ENCODE measurements at regions of chr15 and their contacts with region 1.

Region 1: GRCh38 chr15:68700455-68701123 is 120.1 kb downstream of the ANP32A start:
- DNase-seq: peak; percentile 90

Region 2: DNA sequence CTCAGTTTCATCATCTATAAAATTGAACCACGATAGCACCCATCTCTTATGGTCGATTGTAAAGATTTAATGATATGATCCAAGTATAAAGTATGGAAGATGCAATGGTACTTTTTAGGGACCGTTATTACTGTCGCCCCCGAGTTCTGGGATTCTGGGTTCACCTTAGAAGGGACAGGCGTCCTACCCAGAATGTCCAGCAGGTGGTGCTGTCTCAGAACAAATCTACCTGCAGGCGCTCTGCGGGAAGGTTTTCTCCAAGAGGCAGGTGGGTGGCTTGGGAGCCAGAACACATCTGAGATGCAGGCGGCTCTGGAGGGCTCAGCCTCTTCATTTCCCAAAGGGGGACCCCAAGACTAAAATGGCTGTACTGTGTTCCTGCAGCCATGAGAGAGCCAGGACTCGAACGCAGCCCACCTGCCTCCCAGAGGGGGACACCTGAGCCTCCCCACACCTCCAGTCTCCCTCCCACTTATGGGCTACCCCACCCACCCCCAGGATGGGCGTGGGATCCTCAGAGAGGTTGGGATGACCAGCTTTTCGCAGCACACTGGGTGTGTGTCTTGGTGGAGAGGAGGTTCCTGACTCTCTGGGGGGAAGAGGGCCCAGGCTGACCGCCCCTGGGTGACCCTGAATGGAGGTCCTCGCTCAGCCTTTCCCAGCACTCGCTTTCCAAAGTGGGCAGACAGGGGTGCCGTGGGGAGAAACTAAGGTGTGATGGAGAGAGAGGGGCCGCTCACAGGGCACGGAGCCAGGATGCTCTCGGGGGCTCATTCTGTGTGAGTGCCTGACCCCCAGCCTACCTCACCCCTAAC is 149.9 kb before region 1 on chr15:
- intact Hi-C with region 1: no loop called
- DNase-seq: no peak

Region 3: GRCh38 chr15:68730471-68730919 is 29.9 kb after region 1 on chr15:
- intact Hi-C with region 1: loop called (anchors 2 kb)
- DNase-seq: peak; percentile 70

Region 4: GRCh38 chr15:68795298-68795848 is 94.8 kb after region 1 on chr15:
- intact Hi-C with region 1: loop called (anchors 10 kb)
- DNase-seq: peak; percentile 97

Region 5: DNA sequence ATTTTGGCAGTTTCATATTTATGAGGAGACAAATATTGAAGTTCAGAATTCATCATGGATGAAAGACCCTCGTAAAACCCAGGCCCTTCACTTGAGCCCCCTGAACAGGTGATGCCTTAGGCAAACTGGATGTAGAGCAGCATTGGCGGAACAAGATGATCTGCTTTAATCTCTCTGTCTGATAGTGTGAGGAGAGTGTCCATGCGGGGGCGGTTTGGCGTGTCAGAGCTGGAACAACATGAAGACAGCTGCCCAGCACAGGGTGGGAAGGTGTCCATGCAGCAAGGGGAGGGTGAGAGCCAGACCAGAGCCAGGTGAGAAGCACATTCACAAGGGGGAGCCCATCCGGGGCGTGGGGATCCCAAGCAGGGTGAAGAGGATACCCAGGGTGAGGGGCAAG is 151.9 kb after region 1 on chr15:
- intact Hi-C with region 1: no loop called
- DNase-seq: no peak